AG04449 (cell line): ENCODE measurements at regions of chr5 and their contacts with region 1.

Region 1: DNA sequence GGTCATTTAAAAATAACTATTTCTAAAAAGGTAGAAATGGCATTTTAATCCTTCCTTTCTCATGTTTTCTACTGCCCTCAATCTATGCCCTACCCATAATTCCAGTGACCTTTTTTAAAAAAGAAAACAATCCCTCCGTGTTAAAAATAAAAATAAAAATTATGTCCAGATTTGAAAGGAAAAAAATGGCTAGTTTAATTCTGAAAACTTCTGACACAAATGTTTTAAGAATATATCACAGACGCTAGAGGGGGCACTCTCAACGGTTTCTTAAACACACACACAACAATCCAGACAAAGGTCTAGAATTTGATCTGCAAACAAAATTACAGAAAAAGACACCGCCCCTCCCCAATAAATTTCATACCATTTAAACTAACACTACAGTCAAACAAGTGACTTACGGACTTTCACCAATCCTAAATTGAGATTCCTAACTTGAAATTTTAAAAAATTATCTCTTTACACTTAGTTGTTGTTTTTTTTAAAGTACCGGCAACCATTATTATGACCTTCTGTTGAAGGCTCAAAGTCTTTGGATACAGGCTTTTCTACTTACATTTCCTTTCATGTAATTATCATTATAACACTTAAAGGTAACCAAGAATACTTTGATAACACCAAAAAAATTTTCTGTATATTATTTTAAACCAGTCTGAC is 38.2 kb downstream of the CLINT1 start:
- DNase-seq: no peak
- H3K4me3 ChIP-seq: no peak overlapping the region
- CTCF ChIP-seq: peak; percentile 8

Region 2: GRCh38 chr5:157808043-157808442 is 12.7 kb before region 1 on chr5:
- CTCF ChIA-PET with region 1: interaction called, 15 read pairs
- POLR2A ChIA-PET with region 1: no interaction called
- DNase-seq: no peak
- H3K4me3 ChIP-seq: no peak overlapping the region
- CTCF ChIP-seq: no peak

Region 3: GRCh38 chr5:157917899-157918809 is 97.4 kb after region 1 on chr5:
- CTCF ChIA-PET with region 1: interaction called, 10 read pairs
- POLR2A ChIA-PET with region 1: no interaction called
- DNase-seq: peak; percentile 33
- H3K4me3 ChIP-seq: no peak overlapping the region
- CTCF ChIP-seq: peak; percentile 59

Region 4: GRCh38 chr5:157994906-157995519 is 174.3 kb after region 1 on chr5:
- CTCF ChIA-PET with region 1: interaction called, 68 read pairs
- POLR2A ChIA-PET with region 1: no interaction called
- DNase-seq: no peak
- H3K4me3 ChIP-seq: no peak overlapping the region
- CTCF ChIP-seq: peak; percentile 86

Region 5: DNA sequence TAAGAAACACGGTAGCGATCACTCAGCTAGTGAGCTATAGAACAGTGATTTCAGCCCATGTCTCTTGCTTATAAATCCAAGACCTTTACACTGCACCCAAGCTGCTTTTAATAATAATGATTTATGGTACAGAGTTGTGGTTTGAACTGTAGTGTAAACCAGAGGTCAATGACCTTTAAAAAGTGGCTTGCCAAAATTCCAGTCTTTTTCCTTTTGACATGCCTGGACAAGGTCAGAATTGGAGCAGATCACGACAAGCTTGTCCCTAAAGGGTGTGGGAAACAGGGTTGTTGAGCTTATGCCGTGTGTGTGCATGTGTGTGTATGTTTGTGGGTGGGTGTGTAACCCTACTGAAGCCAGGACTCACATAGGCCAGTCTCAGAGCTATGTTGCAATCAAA is 263.6 kb after region 1 on chr5:
- CTCF ChIA-PET with region 1: no interaction called
- POLR2A ChIA-PET with region 1: no interaction called
- DNase-seq: no peak
- H3K4me3 ChIP-seq: no peak overlapping the region
- CTCF ChIP-seq: no peak